GM13977 (cell line): ENCODE measurements at regions of chr18 and their contacts with region 1.

Region 1: GRCh38 chr18:35143622-35144596 is 96.9 kb upstream of the ZNF397 start:
- DNase-seq: peak; percentile 49
- CTCF ChIP-seq: peak; percentile 65

Region 2: DNA sequence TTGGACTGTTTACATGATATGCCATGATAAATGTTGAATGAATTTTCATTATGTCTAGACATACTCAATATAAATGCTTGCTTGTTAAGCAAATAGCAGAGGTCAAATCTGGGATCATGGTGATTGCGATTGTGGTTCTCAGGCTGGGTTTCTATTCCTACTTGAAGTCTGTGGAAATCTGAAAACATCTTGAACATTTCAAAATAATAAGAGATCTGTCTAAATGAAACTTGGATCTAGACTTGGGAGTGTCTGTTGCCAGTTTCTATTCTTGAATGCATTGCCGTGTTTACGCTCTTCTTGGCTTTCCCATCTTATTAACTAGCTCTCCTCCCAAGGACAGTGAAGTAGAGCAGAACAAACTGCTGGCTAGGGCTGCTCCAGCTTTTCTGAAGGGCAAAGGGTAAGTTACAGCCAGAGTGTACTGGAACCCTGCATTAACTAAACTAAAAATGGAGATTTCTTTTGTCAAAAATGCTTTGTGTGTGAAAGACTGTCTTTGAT is 306.1 kb before region 1 on chr18:
- in situ Hi-C with region 1: no loop called
- DNase-seq: no peak
- CTCF ChIP-seq: no peak

Region 3: GRCh38 chr18:35005963-35006577 is 137.8 kb before region 1 on chr18:
- in situ Hi-C with region 1: loop called (anchors 10 kb)
- DNase-seq: peak; percentile 57
- CTCF ChIP-seq: peak; percentile 42